PC-9 (cell line): ENCODE measurements at regions of chr1 and their contacts with region 1.

Region 1: DNA sequence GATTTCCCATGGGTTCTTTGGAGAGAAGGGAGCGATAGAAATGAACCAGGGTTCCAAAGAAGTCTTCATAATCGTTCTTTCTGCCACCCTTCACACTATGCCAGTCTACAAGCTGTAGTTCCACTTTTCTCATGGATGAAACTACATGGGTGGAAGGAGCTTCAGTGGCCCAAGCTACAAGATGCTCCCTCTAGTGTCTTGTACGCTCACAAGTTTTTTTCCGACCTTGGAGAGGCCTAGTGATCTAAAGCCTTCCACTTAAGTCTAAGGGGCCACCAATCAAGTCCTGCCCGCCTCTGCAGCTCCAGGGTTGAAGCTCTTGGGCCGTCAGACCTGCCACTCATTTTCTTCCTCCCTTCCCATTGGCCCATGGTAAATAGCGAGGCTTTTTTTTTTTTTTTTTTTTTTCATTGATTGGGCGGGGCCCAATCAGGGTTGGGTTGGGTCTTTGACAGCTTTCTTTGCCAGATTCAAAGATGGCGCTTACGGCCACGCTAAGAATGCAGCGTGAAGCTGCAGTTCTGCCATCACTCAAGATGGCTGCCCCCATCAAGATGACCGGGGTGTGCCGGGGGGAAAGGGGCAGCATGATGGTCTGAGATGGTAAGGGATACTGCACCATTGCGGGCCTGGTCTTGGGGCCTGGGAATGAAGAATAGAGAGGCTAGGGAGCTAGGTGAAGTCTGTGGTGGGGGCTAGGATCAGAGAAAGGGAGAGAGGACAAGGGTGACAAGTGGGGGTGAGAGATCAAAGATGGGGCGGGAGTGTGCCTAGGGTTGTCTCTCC is at the start of gene TOMM40L:
- DNase-seq: peak; percentile 84 to 95
- H3K4me3 ChIP-seq: peak within 1 kb of the TSS; percentile 83
- H3K27ac ChIP-seq: no peak within 1 kb of the TSS
- H3K4me1 ChIP-seq: peaks cover 16% of the 10 kb centered on the region
- H3K27me3 ChIP-seq: no peaks in the 10 kb centered on the region
- CTCF ChIP-seq: peak; percentile 52
- total RNA-seq, gene TOMM40L: 4.3 and 6.7 TPM in 2 replicates

Region 2: GRCh38 chr1:161117759-161118581 is 107.8 kb before region 1 on chr1 and contains the starts of genes NIT1 and PFDN2:
- CTCF ChIA-PET with region 1: no interaction called
- POLR2A ChIA-PET with region 1: no interaction called
- intact Hi-C with region 1: no loop called
- DNase-seq: peak; percentile 70 to 80
- H3K4me3 ChIP-seq: peak within 1 kb of the TSS; percentile 82
- H3K27ac ChIP-seq: peak within 1 kb of the TSS; percentile 81
- H3K4me1 ChIP-seq: peaks cover 50% of the 10 kb centered on the region
- H3K27me3 ChIP-seq: no peaks in the 10 kb centered on the region
- CTCF ChIP-seq: no peak
- total RNA-seq, gene NIT1: 25.9 and 26.8 TPM in 2 replicates
- total RNA-seq, gene PFDN2: 68.2 and 74.4 TPM in 2 replicates

Region 3: GRCh38 chr1:161290779-161291178 is 65.1 kb after region 1 on chr1:
- CTCF ChIA-PET with region 1: interaction called, 13 read pairs
- POLR2A ChIA-PET with region 1: no interaction called
- intact Hi-C with region 1: loop called (anchors 1 kb)
- DNase-seq: no peak
- H3K4me3 ChIP-seq: no peak overlapping the region
- H3K27ac ChIP-seq: no peak overlapping the region
- H3K4me1 ChIP-seq: no peaks in the 10 kb centered on the region
- H3K27me3 ChIP-seq: peaks cover 13% of the 10 kb centered on the region; the same call in 1 of the 2 replicates
- CTCF ChIP-seq: no peak

Region 4: GRCh38 chr1:161766102-161766981 is 540.6 kb after region 1 on chr1 and contains the start of gene ATF6:
- CTCF ChIA-PET with region 1: no interaction called
- POLR2A ChIA-PET with region 1: no interaction called
- intact Hi-C with region 1: loop called (anchors 10 kb)
- DNase-seq: peak; percentile 83 to 88
- H3K4me3 ChIP-seq: peak within 1 kb of the TSS; percentile 74
- H3K27ac ChIP-seq: peak within 1 kb of the TSS; percentile 90
- H3K4me1 ChIP-seq: peaks cover 11% of the 10 kb centered on the region
- H3K27me3 ChIP-seq: no peaks in the 10 kb centered on the region
- CTCF ChIP-seq: no peak
- total RNA-seq, gene ATF6: 14.6 and 19.5 TPM in 2 replicates